ENCODE measurements at regions of chr7 and their contacts with region 1.

Region 1: GRCh38 chr7:124856299-124856888 is 73.2 kb downstream of the POT1 start:
- DNase-seq: peak in 4 of 9 donors; percentile 3 to 23 (median 8)
- ATAC-seq: peak; percentile 52
- H3K4me3 ChIP-seq: no peak overlapping the region
- H3K4me3 Mint-ChIP-seq: no peak overlapping the region
- H3K27ac ChIP-seq: no peak overlapping the region
- H3K27ac Mint-ChIP-seq: no peak overlapping the region
- H3K4me1 ChIP-seq: no peaks in the 10 kb centered on the region
- H3K4me1 Mint-ChIP-seq: peaks cover 0 to 3% (median 0%) of the 10 kb centered on the region in 7 donors
- H3K27me3 ChIP-seq: no peaks in the 10 kb centered on the region
- H3K27me3 Mint-ChIP-seq: no peaks in the 10 kb centered on the region

Region 2: DNA sequence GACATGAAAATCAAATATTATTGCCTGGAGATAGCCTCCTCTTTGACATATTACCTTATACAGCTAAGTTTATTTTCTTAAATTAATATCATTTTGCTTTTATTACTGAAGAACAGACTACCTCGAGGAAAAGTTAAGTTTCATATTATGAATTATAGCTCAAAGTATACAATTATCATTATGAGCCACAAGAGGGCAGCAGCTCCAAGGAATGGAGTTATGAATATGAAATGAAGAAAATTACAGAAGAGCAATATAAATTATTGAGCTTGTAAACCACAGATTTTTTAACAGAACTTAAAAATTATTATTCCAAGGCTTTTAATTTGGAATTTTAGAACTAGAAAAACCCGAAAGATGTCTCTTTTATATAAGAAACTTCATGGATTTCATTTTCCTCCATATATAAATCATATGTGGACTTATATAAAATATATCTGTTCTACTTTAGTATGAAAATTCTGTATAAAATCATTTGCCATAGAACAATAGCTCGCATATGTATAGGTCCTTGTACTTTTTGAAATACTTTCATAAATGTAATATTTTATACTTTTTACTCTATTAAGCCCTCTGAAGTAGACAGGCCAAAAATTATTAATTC is 1362.1 kb before region 1 on chr7:
- CTCF ChIA-PET with region 1: no interaction called
- POLR2A ChIA-PET with region 1: no interaction called
- intact Hi-C with region 1: loop called in 1 of 2 experiments (anchors 1 kb)
- DNase-seq: peak in 6 of 9 donors; percentile 2 to 46 (median 36)
- ATAC-seq: peak; percentile 67
- H3K4me3 ChIP-seq: no peak overlapping the region
- H3K4me3 Mint-ChIP-seq: no peak overlapping the region
- H3K27ac ChIP-seq: no peak overlapping the region
- H3K27ac Mint-ChIP-seq: no peak overlapping the region
- H3K4me1 ChIP-seq: no peaks in the 10 kb centered on the region
- H3K4me1 Mint-ChIP-seq: no peaks in the 10 kb centered on the region
- H3K27me3 ChIP-seq: no peaks in the 10 kb centered on the region
- H3K27me3 Mint-ChIP-seq: peaks cover 10 to 41% (median 30%) of the 10 kb centered on the region in 5 donors

Region 3: DNA sequence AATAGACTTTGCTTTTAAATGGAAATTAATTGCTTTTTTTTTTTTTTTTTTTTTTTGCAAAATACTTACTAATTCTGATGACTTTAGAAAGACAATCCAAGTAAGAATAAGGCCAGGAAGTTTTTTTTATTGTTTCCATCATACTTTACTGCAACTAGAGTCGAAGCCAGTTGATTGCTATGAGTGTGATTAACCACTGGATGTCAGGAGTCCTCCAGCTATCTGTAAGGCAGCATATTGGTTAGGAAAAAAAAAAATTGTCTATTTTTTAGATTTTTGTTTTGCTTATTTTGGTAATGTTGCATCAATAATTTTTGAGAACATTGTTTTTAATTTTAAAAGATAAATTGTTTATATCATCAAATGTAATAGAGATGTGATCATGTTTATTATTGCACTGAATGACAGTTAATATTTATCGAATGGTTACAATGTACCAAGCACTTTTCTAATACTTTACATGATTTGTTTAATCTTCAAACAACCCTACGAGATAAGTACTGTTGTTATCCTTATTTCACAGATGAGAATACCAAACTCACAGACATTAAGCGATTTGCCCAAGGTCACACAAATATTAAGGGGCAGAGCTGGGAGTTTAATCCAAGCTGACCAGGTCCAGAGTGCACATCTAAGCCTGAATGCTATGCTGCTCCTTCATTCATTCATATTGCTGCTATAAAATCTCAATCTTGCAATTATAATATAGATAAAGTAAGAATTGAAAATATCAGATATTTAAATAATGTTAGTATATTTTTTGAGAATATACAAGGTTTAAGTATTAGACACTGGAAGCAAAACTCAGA is 1220.6 kb before region 1 on chr7:
- CTCF ChIA-PET with region 1: no interaction called
- POLR2A ChIA-PET with region 1: no interaction called
- intact Hi-C with region 1: loop called in 1 of 2 experiments (anchors 5 kb)
- DNase-seq: peak in 1 of 9 donors; percentile 3
- ATAC-seq: no peak
- H3K4me3 ChIP-seq: no peak overlapping the region
- H3K4me3 Mint-ChIP-seq: no peak overlapping the region
- H3K27ac ChIP-seq: no peak overlapping the region
- H3K27ac Mint-ChIP-seq: no peak overlapping the region
- H3K4me1 ChIP-seq: no peaks in the 10 kb centered on the region
- H3K4me1 Mint-ChIP-seq: no peaks in the 10 kb centered on the region
- H3K27me3 ChIP-seq: peaks cover 0 to 4% of the 10 kb centered on the region in 2 donors
- H3K27me3 Mint-ChIP-seq: peaks cover 19 to 31% (median 26%) of the 10 kb centered on the region in 5 donors

Region 4: DNA sequence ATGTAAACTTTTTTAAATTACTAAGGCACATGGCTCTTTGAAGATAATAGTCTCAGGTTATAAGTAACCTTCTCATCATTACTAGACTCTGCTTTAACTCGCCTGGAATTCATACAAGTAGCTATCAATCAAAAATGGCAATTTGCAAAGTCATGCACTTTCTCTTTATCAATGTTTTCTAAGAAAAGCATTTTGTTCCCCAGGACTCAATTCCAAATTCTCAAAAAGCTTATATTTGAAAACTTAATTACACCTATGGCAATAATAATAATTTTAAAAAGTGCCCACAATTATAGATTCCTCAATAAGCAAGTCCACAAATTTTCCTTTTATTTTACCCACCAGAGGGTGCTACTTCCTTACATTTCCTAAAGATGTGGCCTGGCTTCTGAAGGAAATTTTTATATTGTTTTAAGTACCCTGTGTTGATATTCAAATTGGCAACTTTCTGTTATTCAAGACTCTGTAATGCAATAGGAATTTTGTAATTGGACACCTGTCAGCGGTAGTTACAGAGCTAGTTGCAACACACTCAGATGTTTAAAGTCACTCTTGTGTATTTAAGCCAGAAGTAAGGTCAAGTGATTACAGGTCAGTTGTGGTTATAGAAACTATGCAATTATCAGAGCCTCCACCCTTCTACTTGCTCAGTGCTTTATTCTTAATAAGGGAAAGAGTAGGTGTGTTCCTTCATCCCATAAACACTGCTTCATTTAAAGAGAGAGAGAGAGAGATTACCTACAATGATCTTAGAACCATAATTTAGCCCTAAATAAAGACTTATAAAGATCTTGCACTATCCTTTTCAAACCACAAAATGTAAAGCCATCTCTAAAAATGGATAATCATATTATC is 1058.5 kb before region 1 on chr7:
- CTCF ChIA-PET with region 1: no interaction called
- POLR2A ChIA-PET with region 1: no interaction called
- intact Hi-C with region 1: loop called in 1 of 2 experiments (anchors 5 kb)
- DNase-seq: peak in 5 of 9 donors; percentile 3 to 10 (median 9)
- ATAC-seq: no peak
- H3K4me3 ChIP-seq: no peak overlapping the region
- H3K4me3 Mint-ChIP-seq: no peak overlapping the region
- H3K27ac ChIP-seq: no peak overlapping the region
- H3K27ac Mint-ChIP-seq: no peak overlapping the region
- H3K4me1 ChIP-seq: no peaks in the 10 kb centered on the region
- H3K4me1 Mint-ChIP-seq: no peaks in the 10 kb centered on the region
- H3K27me3 ChIP-seq: no peaks in the 10 kb centered on the region
- H3K27me3 Mint-ChIP-seq: peaks cover 0 to 3% (median 0%) of the 10 kb centered on the region in 5 donors

Region 5: GRCh38 chr7:123871998-123872867 is 984.2 kb before region 1 on chr7:
- CTCF ChIA-PET with region 1: no interaction called
- POLR2A ChIA-PET with region 1: no interaction called
- intact Hi-C with region 1: loop called in 1 of 2 experiments (anchors 2 kb)
- DNase-seq: peak in 5 of 9 donors; percentile 3 to 26 (median 16)
- ATAC-seq: peak; percentile 63
- H3K4me3 ChIP-seq: no peak overlapping the region
- H3K4me3 Mint-ChIP-seq: no peak overlapping the region
- H3K27ac ChIP-seq: no peak overlapping the region
- H3K27ac Mint-ChIP-seq: no peak overlapping the region
- H3K4me1 ChIP-seq: no peaks in the 10 kb centered on the region
- H3K4me1 Mint-ChIP-seq: peaks cover 0 to 6% (median 0%) of the 10 kb centered on the region in 7 donors
- H3K27me3 ChIP-seq: no peaks in the 10 kb centered on the region
- H3K27me3 Mint-ChIP-seq: peaks cover 5 to 28% (median 10%) of the 10 kb centered on the region in 5 donors

Region 6: GRCh38 chr7:124101173-124101768 is 755.1 kb before region 1 on chr7:
- CTCF ChIA-PET with region 1: no interaction called
- POLR2A ChIA-PET with region 1: no interaction called
- intact Hi-C with region 1: loop called in 1 of 2 experiments (anchors 1 kb)
- DNase-seq: no peak
- ATAC-seq: no peak
- H3K4me3 ChIP-seq: no peak overlapping the region
- H3K4me3 Mint-ChIP-seq: no peak overlapping the region
- H3K27ac ChIP-seq: no peak overlapping the region
- H3K27ac Mint-ChIP-seq: no peak overlapping the region
- H3K4me1 ChIP-seq: no peaks in the 10 kb centered on the region
- H3K4me1 Mint-ChIP-seq: no peaks in the 10 kb centered on the region
- H3K27me3 ChIP-seq: no peaks in the 10 kb centered on the region
- H3K27me3 Mint-ChIP-seq: peaks cover 0 to 8% (median 0%) of the 10 kb centered on the region in 5 donors

Region 7: GRCh38 chr7:124155432-124156022 is 700.9 kb before region 1 on chr7:
- CTCF ChIA-PET with region 1: no interaction called
- POLR2A ChIA-PET with region 1: no interaction called
- intact Hi-C with region 1: loop called in 1 of 2 experiments (anchors 5 kb)
- DNase-seq: no peak
- ATAC-seq: no peak
- H3K4me3 ChIP-seq: no peak overlapping the region
- H3K4me3 Mint-ChIP-seq: no peak overlapping the region
- H3K27ac ChIP-seq: no peak overlapping the region
- H3K27ac Mint-ChIP-seq: no peak overlapping the region
- H3K4me1 ChIP-seq: no peaks in the 10 kb centered on the region
- H3K4me1 Mint-ChIP-seq: no peaks in the 10 kb centered on the region
- H3K27me3 ChIP-seq: no peaks in the 10 kb centered on the region
- H3K27me3 Mint-ChIP-seq: no peaks in the 10 kb centered on the region

Region 8: DNA sequence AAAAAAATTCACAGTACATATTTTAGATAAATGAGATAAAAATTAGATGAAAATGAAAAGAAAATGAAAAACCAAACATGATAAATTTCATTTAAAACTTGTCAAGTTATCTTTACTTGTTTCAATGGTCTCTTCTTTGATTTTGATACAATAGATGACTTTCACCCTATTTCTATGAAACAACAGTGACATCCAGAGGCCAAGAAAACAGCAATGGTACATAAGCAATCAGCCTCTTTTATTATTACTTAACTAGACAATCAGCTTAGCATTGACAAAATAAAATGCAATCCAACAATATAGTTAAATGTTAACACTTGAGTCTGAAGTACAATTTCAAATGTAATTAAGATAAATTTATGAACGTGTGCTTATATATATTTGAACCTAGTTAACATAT is 16.0 kb before region 1 on chr7:
- CTCF ChIA-PET with region 1: no interaction called
- POLR2A ChIA-PET with region 1: no interaction called
- intact Hi-C with region 1: no loop called
- DNase-seq: no peak
- ATAC-seq: no peak
- H3K4me3 ChIP-seq: no peak overlapping the region
- H3K4me3 Mint-ChIP-seq: no peak overlapping the region
- H3K27ac ChIP-seq: no peak overlapping the region
- H3K27ac Mint-ChIP-seq: no peak overlapping the region
- H3K4me1 ChIP-seq: no peaks in the 10 kb centered on the region
- H3K4me1 Mint-ChIP-seq: peaks cover 0 to 10% (median 0%) of the 10 kb centered on the region in 7 donors
- H3K27me3 ChIP-seq: no peaks in the 10 kb centered on the region
- H3K27me3 Mint-ChIP-seq: no peaks in the 10 kb centered on the region

Measured in naive thymus-derived CD4-positive, alpha-beta T cell (primary cell).